ENCODE measurements at regions of chr4 and their contacts with region 1.

Region 1: GRCh38 chr4:121252224-121252806 is 88.2 kb upstream of the TNIP3 start:
- DNase-seq: peak; percentile 59
- H3K4me3 Mint-ChIP-seq: no peak overlapping the region
- H3K27ac Mint-ChIP-seq: no peak overlapping the region
- H3K4me1 Mint-ChIP-seq: peaks cover 54% of the 10 kb centered on the region
- H3K27me3 Mint-ChIP-seq: no peaks in the 10 kb centered on the region

Region 2: DNA sequence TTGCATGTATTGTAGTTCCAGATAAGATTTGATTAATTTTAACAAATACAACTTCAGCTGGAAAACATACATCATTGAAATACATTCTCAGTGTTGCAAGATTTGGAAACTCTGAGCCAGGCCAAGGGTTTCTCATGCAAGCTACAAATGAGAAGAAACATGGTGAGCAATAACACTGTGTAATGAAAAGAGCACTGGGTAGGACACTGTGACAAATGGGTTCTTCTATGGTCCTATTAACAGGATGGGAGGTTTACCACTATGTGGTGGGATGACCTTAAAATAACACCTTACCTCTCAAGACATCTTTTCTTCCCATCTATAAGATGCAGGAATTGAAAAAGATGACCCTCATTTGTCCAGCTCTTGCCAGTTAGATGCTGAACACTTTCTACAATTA is 160.4 kb before region 1 on chr4:
- CTCF ChIA-PET with region 1: no interaction called
- POLR2A ChIA-PET with region 1: no interaction called
- DNase-seq: no peak
- H3K4me3 Mint-ChIP-seq: no peak overlapping the region
- H3K27ac Mint-ChIP-seq: no peak overlapping the region
- H3K4me1 Mint-ChIP-seq: no peaks in the 10 kb centered on the region
- H3K27me3 Mint-ChIP-seq: peaks cover 4% of the 10 kb centered on the region

Region 3: GRCh38 chr4:121199742-121200561 is 52.4 kb before region 1 on chr4:
- CTCF ChIA-PET with region 1: interaction called, 17 read pairs
- POLR2A ChIA-PET with region 1: interaction called, 7 read pairs
- DNase-seq: peak; percentile 50
- H3K4me3 Mint-ChIP-seq: peak overlapping the region; percentile 5
- H3K27ac Mint-ChIP-seq: peak overlapping the region; percentile 23
- H3K4me1 Mint-ChIP-seq: peaks cover 24% of the 10 kb centered on the region
- H3K27me3 Mint-ChIP-seq: peaks cover 1% of the 10 kb centered on the region

Region 4: DNA sequence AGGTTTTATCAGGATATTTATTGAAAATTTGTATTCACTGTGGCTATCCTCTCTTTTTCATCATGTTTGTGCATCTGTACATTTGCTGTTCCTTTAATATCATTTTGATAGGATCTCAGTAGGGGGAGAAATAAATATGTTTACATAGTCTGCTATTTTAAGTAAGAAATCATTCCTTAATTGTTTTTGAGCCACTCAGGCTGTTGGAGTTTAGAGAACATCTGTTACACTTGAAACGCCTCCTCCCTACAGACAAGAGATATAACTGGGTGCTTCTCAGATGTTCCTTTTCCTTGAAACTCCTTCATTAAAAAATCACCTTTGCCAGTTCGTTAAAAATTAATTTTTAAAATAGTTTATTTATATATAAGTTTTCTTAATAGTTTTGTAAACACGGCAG is 69.2 kb after region 1 on chr4:
- CTCF ChIA-PET with region 1: no interaction called
- POLR2A ChIA-PET with region 1: no interaction called
- DNase-seq: no peak
- H3K4me3 Mint-ChIP-seq: no peak overlapping the region
- H3K27ac Mint-ChIP-seq: no peak overlapping the region
- H3K4me1 Mint-ChIP-seq: no peaks in the 10 kb centered on the region
- H3K27me3 Mint-ChIP-seq: peaks cover 41% of the 10 kb centered on the region

Measured in activated CD4-positive, alpha-beta memory T cell treated with anti-CD3 and anti-CD28 coated beads, Interleukin-2, amount 10 ng/mL, durations not matched to agents 7 days and 5 days (primary cell).